Heart left ventricle (tissue), 16 donors: ENCODE measurements at regions of chr1 and their contacts with region 1.

Region 1: GRCh38 chr1:24830680-24831272 is 85.5 kb downstream of the CLIC4 start:
- DNase-seq: no peak
- ATAC-seq: peak; percentile 77 to 83 (median 80)
- H3K4me3 ChIP-seq: no peak overlapping the region
- H3K27ac ChIP-seq: peak overlapping the region in 2 of 12 donors; percentile 17 to 32
- H3K4me1 ChIP-seq: peaks cover 0 to 65% (median 53%) of the 10 kb centered on the region in 12 donors
- H3K27me3 ChIP-seq: no peaks in the 10 kb centered on the region
- CTCF ChIP-seq: peak; percentile 80 to 95 (median 86)
- POLR2A ChIP-seq: no peak

Region 2: GRCh38 chr1:24541711-24542346 is 288.9 kb before region 1 on chr1:
- intact Hi-C with region 1: loop called in 3 of 10 experiments (anchors 5 to 10 kb)
- DNase-seq: no peak
- ATAC-seq: peak in 2 of 4 donors; percentile 30 to 38
- H3K4me3 ChIP-seq: no peak overlapping the region
- H3K27ac ChIP-seq: no peak overlapping the region
- H3K4me1 ChIP-seq: no peaks in the 10 kb centered on the region
- H3K27me3 ChIP-seq: no peaks in the 10 kb centered on the region
- CTCF ChIP-seq: peak; percentile 48 to 70 (median 58)
- POLR2A ChIP-seq: no peak

Region 3: GRCh38 chr1:24688621-24689195 is 142.1 kb before region 1 on chr1:
- intact Hi-C with region 1: loop called (anchors 1 to 2 kb)
- DNase-seq: peak; percentile 76 to 82 (median 81)
- ATAC-seq: peak; percentile 86 to 90 (median 89)
- H3K4me3 ChIP-seq: no peak overlapping the region
- H3K27ac ChIP-seq: peak overlapping the region in 4 of 12 donors; percentile 12 to 51 (median 18)
- H3K4me1 ChIP-seq: peaks cover 1 to 33% (median 15%) of the 10 kb centered on the region in 12 donors
- H3K27me3 ChIP-seq: no peaks in the 10 kb centered on the region
- CTCF ChIP-seq: peak; percentile 80 to 97 (median 90)
- POLR2A ChIP-seq: no peak

Region 4: DNA sequence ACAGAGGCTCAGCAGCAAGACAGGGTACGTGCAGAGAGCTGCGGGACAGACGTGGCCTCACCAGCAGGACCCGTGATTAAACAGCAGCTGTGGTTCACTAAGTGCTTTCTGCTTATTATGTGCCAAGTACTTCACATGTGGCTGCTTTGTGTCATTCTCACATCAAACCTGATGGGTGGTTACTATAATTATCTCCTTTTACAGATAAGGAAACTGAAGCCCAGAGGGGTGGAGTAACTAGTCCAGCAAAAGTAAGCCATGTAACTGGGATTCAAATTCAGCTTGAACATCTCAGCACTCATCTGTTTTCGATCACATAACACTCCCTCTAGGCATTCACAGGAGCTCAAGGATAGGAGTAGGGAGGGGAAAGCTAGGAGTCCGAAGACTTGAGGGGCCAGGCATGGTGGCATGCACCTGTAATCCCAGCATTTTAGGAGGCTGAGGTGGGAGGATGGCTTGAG is 136.4 kb before region 1 on chr1:
- intact Hi-C with region 1: loop called (anchors 1 to 2 kb)
- DNase-seq: peak in 4 of 5 donors; percentile 73 to 88 (median 80)
- ATAC-seq: peak; percentile 91 to 94 (median 92)
- H3K4me3 ChIP-seq: no peak overlapping the region
- H3K27ac ChIP-seq: peak overlapping the region; percentile 35 to 89 (median 73)
- H3K4me1 ChIP-seq: peaks cover 14 to 56% (median 36%) of the 10 kb centered on the region in 12 donors
- H3K27me3 ChIP-seq: no peaks in the 10 kb centered on the region
- CTCF ChIP-seq: no peak
- POLR2A ChIP-seq: no peak

Region 5: GRCh38 chr1:24762133-24762676 is 68.6 kb before region 1 on chr1:
- intact Hi-C with region 1: loop called in 1 of 10 experiments (anchors 5 kb)
- DNase-seq: no peak
- ATAC-seq: peak in 2 of 4 donors; percentile 38 to 71
- H3K4me3 ChIP-seq: peak overlapping the region in 1 of 12 donors; percentile 12
- H3K27ac ChIP-seq: peak overlapping the region in 4 of 12 donors; percentile 11 to 85 (median 31)
- H3K4me1 ChIP-seq: peaks cover 7 to 77% (median 46%) of the 10 kb centered on the region in 12 donors
- H3K27me3 ChIP-seq: no peaks in the 10 kb centered on the region
- CTCF ChIP-seq: no peak
- POLR2A ChIP-seq: no peak

Region 6: GRCh38 chr1:24793447-24794131 is 37.2 kb before region 1 on chr1:
- intact Hi-C with region 1: loop called in 1 of 10 experiments (anchors 5 kb)
- DNase-seq: no peak
- ATAC-seq: peak; percentile 85 to 88 (median 88)
- H3K4me3 ChIP-seq: no peak overlapping the region
- H3K27ac ChIP-seq: peak overlapping the region; percentile 9 to 85 (median 75)
- H3K4me1 ChIP-seq: peaks cover 0 to 46% (median 31%) of the 10 kb centered on the region in 12 donors
- H3K27me3 ChIP-seq: no peaks in the 10 kb centered on the region
- CTCF ChIP-seq: no peak
- POLR2A ChIP-seq: no peak

Region 7: DNA sequence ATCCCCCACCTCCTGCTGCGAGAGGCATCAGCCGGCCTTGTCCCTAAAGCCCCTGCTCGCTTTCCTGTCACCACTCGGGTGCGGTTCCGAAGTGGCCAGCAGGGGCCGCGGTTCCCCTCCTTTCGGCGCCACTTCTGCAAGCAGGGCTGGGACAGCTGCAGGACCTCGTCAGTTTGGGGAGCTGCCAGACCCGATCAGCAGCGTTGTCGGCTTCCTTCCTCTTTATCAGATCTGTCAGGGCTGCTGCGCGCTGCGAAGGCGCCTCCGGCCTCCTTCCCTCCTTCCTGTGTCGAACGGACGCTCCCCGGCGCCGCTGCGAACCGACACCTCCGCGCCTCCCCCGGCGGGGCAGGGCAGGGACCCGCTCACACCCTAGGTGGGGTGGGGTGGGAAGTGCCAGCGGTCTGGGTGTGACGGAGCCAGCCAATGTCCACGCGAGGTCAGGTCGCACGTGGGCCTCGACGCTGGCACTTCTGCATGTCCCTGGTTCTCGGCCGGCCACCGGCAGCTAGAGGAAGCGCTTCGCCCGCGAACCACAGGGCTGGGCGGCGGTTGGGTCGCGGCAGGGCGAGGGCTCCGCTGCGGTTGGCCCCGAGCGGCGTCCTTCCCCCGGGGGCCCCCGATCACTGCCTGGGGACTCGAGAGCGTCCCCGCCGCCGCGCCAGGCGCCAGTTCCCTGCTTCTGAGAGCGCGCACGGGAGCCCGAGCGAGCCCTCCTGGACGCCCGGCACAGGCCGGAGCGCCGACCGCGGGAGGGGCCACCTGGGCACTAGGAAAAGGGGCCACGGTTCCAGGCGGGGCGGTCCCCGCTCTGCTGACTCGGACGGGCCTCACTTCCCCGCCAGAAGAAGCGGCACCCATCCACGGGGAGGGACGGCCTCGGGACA is 17.5 kb after region 1 on chr1:
- intact Hi-C with region 1: no loop called
- DNase-seq: peak; percentile 92 to 96 (median 93)
- ATAC-seq: peak; percentile 89 to 97 (median 93)
- H3K4me3 ChIP-seq: peak overlapping the region in 11 of 12 donors; percentile 18 to 66 (median 57)
- H3K27ac ChIP-seq: peak overlapping the region in 11 of 12 donors; percentile 29 to 90 (median 55)
- H3K4me1 ChIP-seq: peaks cover 0 to 33% (median 13%) of the 10 kb centered on the region in 12 donors
- H3K27me3 ChIP-seq: no peaks in the 10 kb centered on the region
- CTCF ChIP-seq: peak; percentile 84 to 98 (median 94)
- POLR2A ChIP-seq: peak in 1 of 2 donors; percentile 34